ENCODE measurements at regions of chr2 and their contacts with region 1.

Region 1: GRCh38 chr2:161426922-161427663 is 11.0 kb downstream of the TBR1 start:
- DNase-seq: peak; percentile 39
- H3K4me3 ChIP-seq: no peak overlapping the region
- H3K27ac ChIP-seq: no peak overlapping the region
- H3K4me1 ChIP-seq: peaks cover 5% of the 10 kb centered on the region
- H3K27me3 ChIP-seq: peaks cover 71 to 100% of the 10 kb centered on the region in 2 experiments
- CTCF ChIP-seq: no peak
- POLR2A ChIP-seq: no peak

Region 2: DNA sequence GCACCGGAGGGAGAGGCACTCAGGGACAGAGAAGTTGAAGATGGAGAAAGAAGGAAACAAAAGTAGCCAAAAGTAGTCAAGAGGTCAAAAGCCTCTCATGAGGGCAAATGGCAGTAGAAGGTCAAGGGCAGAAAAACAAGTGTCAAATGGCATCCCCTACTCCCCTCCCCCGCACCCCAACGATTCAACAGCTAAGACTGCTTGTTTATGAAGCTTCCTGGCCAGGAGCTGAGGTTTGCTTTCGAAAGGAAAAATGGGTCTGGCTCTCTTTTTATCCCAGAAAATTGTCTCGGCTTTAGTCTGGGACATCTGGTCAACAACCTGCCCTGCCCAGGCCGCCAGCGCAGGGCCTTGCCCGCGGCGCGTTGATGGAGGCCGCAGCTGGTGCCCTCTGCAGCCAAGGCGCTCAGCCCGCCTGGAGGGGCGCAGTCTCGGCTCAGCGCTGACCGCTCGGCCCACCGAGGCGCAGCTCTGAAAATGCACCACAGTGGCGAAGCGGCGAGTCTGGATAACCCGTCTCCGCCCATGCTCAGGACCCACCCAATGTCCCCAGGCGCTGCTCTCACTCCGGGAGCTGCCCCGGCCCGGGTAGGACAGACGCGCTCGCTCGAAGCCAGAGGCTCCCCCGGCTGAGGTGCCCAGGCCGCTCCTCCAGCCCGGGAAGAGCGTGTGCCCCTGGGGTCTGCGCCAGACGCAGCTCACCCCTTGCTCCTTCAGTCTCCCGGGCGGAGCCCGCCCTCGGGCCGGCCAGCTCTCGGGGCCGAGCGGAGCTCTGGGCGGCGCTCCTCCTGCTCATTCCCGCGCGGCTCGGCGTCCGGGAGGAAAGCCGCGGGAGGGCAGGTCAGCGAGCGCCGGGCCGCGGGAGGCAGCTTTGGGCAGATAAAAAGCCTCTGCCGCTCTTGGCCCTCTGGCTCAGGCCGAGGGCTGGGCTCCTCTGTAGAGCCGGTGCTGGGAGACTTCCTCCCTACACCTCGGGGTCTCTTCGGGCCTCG is 12.8 kb before region 1 on chr2:
- CTCF ChIA-PET with region 1: interaction called, 8 read pairs
- POLR2A ChIA-PET with region 1: interaction called, 3 read pairs
- dilution Hi-C with region 1: no loop called
- intact Hi-C with region 1: loop called (anchors 1 kb)
- DNase-seq: peak; percentile 44
- H3K4me3 ChIP-seq: peak overlapping the region in 1 of 3 experiments; percentile 43
- H3K27ac ChIP-seq: no peak overlapping the region
- H3K4me1 ChIP-seq: peaks cover 12% of the 10 kb centered on the region
- H3K27me3 ChIP-seq: peaks cover 44 to 49% of the 10 kb centered on the region in 2 experiments
- CTCF ChIP-seq: peak in 1 of 2 donors; percentile 19
- POLR2A ChIP-seq: no peak

Measured in endothelial cell of umbilical vein (primary cell).